BJ (cell line): ENCODE measurements at regions of chr12 and their contacts with region 1.

Region 1: GRCh38 chr12:14239350-14239934 is 126.0 kb upstream of the ATF7IP start:
- DNase-seq: no peak
- H3K4me3 ChIP-seq: no peak overlapping the region
- H3K27me3 ChIP-seq: no peaks in the 10 kb centered on the region
- CTCF ChIP-seq: no peak

Region 2: GRCh38 chr12:13851828-13852227 is 387.6 kb before region 1 on chr12:
- CTCF ChIA-PET with region 1: no interaction called
- POLR2A ChIA-PET with region 1: no interaction called
- DNase-seq: no peak
- H3K4me3 ChIP-seq: no peak overlapping the region
- H3K27me3 ChIP-seq: no peaks in the 10 kb centered on the region
- CTCF ChIP-seq: no peak

Region 3: DNA sequence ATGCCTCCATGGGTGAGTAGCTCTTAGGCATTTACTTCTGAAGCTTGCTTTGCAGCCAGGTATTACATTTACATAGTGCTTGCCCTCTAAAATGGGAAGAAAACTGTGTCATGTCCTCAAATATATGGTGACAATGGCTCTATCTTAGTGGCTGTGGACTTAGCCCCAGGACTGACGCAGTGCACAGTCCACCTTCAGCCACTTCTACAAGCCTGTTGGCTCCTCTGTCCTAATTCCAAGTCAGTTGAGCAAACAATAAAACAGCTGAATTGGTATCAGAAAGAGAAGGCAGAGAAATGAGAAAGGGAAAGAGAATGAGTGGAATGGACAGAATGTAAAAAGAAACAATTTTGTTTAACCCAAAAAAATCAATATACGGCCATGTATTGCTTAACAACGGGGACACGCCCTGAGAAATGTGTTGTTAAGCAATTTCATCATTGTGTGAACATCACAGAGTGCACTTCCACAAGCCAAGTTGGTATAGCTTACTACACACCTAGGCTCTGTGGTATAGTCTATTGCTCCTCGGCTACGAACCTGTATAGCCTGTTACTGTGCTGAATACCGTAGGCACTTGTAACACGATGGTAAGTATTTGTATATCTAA is 351.6 kb before region 1 on chr12:
- CTCF ChIA-PET with region 1: no interaction called
- POLR2A ChIA-PET with region 1: no interaction called
- DNase-seq: no peak
- H3K4me3 ChIP-seq: no peak overlapping the region
- H3K27me3 ChIP-seq: no peaks in the 10 kb centered on the region
- CTCF ChIP-seq: no peak

Region 4: DNA sequence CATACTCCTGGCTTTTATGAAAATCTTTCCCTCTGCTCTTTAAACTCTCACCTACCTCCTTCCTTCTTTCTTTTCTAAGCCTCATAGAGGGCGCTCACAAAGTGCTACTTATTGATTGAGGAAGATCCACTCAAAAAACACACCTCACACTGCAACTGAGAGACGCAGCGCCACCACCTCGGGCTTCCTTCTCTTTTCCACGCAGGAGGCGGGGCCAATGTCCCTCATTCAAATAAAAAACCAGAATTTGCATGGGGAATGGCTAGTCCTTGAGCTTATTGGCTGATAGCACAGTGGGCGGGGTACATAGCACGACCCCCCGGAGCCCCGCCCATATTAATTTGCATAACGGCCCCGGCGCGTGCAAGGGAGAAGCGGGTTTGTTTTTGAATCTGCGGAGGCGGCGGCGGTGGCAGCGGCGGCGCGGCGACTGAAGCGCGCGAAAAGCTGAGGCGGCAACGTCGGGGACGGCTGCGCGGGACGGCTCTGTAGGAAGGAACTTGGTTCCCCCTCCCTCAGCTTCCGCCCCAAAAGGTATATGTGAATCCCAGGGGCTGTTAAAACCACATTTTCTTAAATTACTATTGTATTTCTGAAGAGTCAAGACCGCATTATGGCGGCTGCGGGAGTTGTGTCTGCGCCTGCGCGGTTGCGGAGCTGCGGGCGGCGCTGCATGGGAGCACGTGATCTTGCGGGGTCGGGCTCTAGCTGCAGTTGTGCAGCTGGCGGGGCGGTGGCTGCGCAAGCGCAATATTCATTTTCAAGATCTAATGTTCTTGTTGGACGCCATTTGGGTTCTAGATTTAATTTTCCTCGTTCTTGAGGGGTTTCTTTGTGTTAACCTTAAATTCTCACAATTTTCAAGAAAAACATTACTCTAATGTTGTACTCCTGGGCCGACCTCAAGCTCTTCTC is 126.1 kb after region 1 on chr12 and contains the start of gene ATF7IP:
- CTCF ChIA-PET with region 1: interaction called, 11 read pairs
- POLR2A ChIA-PET with region 1: interaction called, 4 read pairs
- DNase-seq: peak; percentile 88
- H3K4me3 ChIP-seq: peak within 1 kb of the TSS; percentile 91
- H3K27me3 ChIP-seq: no peaks in the 10 kb centered on the region
- CTCF ChIP-seq: peak; percentile 41
- polyA plus RNA-seq, gene ATF7IP: 8.1 and 10.2 TPM in 2 replicates

Region 5: GRCh38 chr12:14618983-14619382 is 379.5 kb after region 1 on chr12:
- CTCF ChIA-PET with region 1: interaction called, 31 read pairs
- POLR2A ChIA-PET with region 1: no interaction called
- DNase-seq: no peak
- H3K4me3 ChIP-seq: no peak overlapping the region
- H3K27me3 ChIP-seq: no peaks in the 10 kb centered on the region
- CTCF ChIP-seq: peak; percentile 40; the same call in 1 of the 2 replicates

Region 6: DNA sequence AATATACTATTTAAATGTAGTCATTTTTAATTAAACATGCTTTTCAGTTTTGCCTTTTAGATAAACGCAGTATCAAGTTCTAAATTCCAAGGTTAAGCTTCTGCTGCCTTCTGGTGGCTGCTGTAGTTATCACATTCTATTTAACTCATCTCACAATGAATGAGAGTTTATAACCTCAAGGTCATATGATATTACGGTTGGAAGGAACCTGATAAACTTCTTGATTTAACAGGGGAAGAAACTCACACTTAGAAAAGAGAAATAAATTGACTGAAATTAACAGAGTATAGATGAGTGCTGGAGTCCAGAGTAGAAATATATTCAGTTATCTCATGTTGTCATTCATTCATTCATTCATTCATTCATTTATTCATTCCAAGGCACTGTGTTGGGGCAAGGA is 425.1 kb after region 1 on chr12:
- CTCF ChIA-PET with region 1: interaction called, 14 read pairs
- POLR2A ChIA-PET with region 1: no interaction called
- DNase-seq: no peak
- H3K4me3 ChIP-seq: no peak overlapping the region
- H3K27me3 ChIP-seq: no peaks in the 10 kb centered on the region
- CTCF ChIP-seq: peak; percentile 47

Region 7: GRCh38 chr12:14716848-14717444 is 477.5 kb after region 1 on chr12:
- CTCF ChIA-PET with region 1: interaction called, 17 read pairs
- POLR2A ChIA-PET with region 1: no interaction called
- DNase-seq: no peak
- H3K4me3 ChIP-seq: no peak overlapping the region
- H3K27me3 ChIP-seq: no peaks in the 10 kb centered on the region; the same call in 1 of the 2 replicates
- CTCF ChIP-seq: peak; percentile 63